ENCODE measurements at regions of chr17 and their contacts with region 1.

Region 1: GRCh38 chr17:73421761-73422520 is 110.1 kb upstream of the CDC42EP4 start:
- DNase-seq: no peak
- ATAC-seq: no peak
- H3K4me3 ChIP-seq: no peak overlapping the region
- H3K27ac ChIP-seq: no peak overlapping the region
- H3K4me1 ChIP-seq: no peaks in the 10 kb centered on the region
- H3K27me3 ChIP-seq: no peaks in the 10 kb centered on the region
- CTCF ChIP-seq: no peak

Region 2: GRCh38 chr17:73371285-73371684 is 50.7 kb before region 1 on chr17:
- CTCF ChIA-PET with region 1: no interaction called
- POLR2A ChIA-PET with region 1: no interaction called
- in situ Hi-C with region 1: no loop called
- intact Hi-C with region 1: no loop called
- DNase-seq: no peak
- ATAC-seq: no peak
- H3K4me3 ChIP-seq: no peak overlapping the region
- H3K27ac ChIP-seq: no peak overlapping the region
- H3K4me1 ChIP-seq: no peaks in the 10 kb centered on the region; the same call in 1 of the 2 replicates
- H3K27me3 ChIP-seq: peaks cover 4% of the 10 kb centered on the region; the same call in 1 of the 2 replicates
- CTCF ChIP-seq: no peak

Region 3: GRCh38 chr17:73492821-73493814 is 71.2 kb after region 1 on chr17:
- CTCF ChIA-PET with region 1: interaction called, 13 read pairs
- POLR2A ChIA-PET with region 1: no interaction called
- in situ Hi-C with region 1: no loop called
- intact Hi-C with region 1: no loop called
- DNase-seq: no peak
- ATAC-seq: no peak
- H3K4me3 ChIP-seq: no peak overlapping the region
- H3K27ac ChIP-seq: no peak overlapping the region
- H3K4me1 ChIP-seq: no peaks in the 10 kb centered on the region
- H3K27me3 ChIP-seq: peaks cover 28% of the 10 kb centered on the region; the same call in 1 of the 2 replicates
- CTCF ChIP-seq: no peak